BJ (cell line): ENCODE measurements at regions of chr11 and their contacts with region 1.

Region 1: GRCh38 chr11:2151500-2152257 is 9.3 kb downstream of the INS start:
- DNase-seq: no peak
- H3K4me3 ChIP-seq: no peak overlapping the region
- H3K27me3 ChIP-seq: peaks cover 11% of the 10 kb centered on the region
- CTCF ChIP-seq: peak; percentile 76

Region 2: GRCh38 chr11:1640076-1640946 is 511.4 kb before region 1 on chr11:
- CTCF ChIA-PET with region 1: interaction called, 11 read pairs
- POLR2A ChIA-PET with region 1: no interaction called
- DNase-seq: no peak
- H3K4me3 ChIP-seq: no peak overlapping the region
- H3K27me3 ChIP-seq: peaks cover 5% of the 10 kb centered on the region
- CTCF ChIP-seq: peak; percentile 86

Region 3: GRCh38 chr11:1832211-1832919 is 319.3 kb before region 1 on chr11:
- CTCF ChIA-PET with region 1: interaction called, 114 read pairs
- POLR2A ChIA-PET with region 1: no interaction called
- DNase-seq: no peak
- H3K4me3 ChIP-seq: no peak overlapping the region
- H3K27me3 ChIP-seq: peaks cover 2% of the 10 kb centered on the region; the same call in 1 of the 2 replicates
- CTCF ChIP-seq: peak; percentile 95

Region 4: GRCh38 chr11:1876361-1877063 is 275.2 kb before region 1 on chr11:
- CTCF ChIA-PET with region 1: interaction called, 114 read pairs
- POLR2A ChIA-PET with region 1: no interaction called
- DNase-seq: no peak
- H3K4me3 ChIP-seq: no peak overlapping the region
- H3K27me3 ChIP-seq: no peaks in the 10 kb centered on the region; the same call in 1 of the 2 replicates
- CTCF ChIP-seq: peak; percentile 70

Region 5: DNA sequence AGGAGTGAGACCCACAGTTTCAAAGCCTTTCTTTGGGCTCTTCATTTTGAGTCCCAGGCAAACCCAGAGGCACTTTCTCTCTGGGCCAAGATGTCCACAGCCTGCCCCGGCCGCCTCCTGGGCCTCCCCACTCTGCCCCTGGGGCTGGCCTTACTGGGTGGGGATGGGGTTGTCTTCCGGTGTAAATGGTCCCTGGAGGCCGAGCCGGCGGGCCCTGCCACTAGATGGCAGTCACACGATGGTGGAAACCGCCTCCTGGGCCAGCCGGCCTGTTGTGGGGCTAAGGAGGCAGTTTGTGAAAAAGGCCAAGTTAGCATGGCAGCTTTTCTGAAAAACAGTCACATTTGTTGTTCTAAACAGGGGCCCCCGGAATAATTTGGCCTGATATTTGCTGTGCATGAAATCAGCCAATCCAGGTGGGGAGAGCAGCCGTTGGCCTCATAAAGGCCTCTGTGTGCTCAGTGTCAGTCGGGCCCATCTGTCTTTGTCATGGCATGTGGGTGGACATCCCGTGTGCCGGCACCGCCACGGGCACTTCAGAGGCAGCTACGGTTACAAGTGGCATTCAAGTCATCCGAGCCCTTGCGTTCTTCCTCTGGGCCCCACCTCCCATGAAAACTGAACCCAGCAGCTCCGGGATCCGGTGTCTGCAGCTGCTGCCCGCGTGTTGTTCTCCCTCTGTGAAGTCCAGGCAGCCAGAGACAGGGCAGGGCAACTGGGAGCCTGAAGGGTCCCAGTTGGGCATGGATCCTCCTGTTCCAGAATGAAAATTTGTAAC is 198.0 kb before region 1 on chr11:
- CTCF ChIA-PET with region 1: interaction called, 85 read pairs
- POLR2A ChIA-PET with region 1: no interaction called
- DNase-seq: no peak
- H3K4me3 ChIP-seq: no peak overlapping the region
- H3K27me3 ChIP-seq: no peaks in the 10 kb centered on the region
- CTCF ChIP-seq: peak; percentile 17; the same call in 1 of the 2 replicates

Region 6: DNA sequence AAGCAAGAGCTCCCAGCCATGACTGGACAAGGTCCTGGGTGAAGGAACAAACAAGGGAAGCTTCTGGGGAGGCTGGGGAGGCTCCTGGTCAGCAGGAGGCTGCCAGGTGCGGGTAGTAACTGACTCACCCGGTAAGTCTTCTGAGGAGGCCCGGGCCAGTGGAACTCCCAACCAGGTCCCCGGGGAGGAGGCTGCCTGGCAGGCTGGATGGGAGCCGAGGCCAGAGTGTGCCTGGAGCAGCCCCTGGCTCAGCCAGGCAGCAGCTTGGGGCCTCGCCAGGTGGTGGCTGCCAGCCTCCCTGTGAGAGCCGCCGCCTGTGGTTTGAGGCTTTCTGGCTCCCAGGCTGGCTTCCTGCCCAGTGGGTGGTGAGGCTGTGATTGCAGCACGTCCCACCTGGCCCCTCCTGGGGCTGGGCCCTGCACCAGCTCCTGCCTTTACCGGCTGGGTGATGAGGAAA is 58.7 kb before region 1 on chr11:
- CTCF ChIA-PET with region 1: interaction called, 44 read pairs
- POLR2A ChIA-PET with region 1: no interaction called
- DNase-seq: no peak
- H3K4me3 ChIP-seq: no peak overlapping the region
- H3K27me3 ChIP-seq: no peaks in the 10 kb centered on the region
- CTCF ChIP-seq: no peak

Region 7: DNA sequence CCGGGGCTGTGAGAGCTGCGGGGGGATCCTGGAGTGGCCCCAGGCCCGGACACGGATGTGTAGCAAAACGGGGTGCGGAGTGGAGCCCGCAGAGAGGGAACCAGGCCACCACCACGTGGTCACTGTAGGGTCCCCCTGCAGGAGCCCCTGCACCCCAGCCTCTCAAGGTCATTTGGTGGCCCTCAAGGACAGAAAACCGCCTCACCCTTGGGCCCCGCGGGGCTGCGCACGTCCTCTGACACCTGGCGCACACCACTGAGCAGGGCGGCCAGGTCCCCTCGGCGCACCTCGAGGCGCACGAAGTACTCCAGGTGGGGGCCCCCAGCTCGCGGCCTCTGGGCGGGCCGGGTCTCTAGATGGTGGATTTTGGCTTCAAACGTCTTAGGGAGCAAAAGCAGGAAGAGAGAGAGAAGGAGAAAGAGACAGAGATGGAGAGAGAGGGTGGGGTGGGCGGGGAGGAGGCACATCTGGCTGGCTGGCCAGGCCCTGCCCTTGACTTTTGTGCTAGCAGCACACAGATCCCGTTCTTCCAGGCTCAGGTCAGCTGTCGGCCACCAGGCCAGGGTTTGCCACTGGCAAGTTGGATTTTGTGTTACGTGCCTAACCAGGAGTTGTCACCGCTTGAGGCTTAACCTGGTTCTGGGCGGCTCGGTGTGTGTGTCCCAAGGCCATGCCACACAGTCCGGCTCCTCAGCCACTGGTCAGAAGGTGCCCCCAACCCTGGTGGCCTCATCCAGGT is 16.8 kb after region 1 on chr11:
- CTCF ChIA-PET with region 1: interaction called, 42 read pairs
- POLR2A ChIA-PET with region 1: no interaction called
- DNase-seq: no peak
- H3K4me3 ChIP-seq: no peak overlapping the region
- H3K27me3 ChIP-seq: no peaks in the 10 kb centered on the region
- CTCF ChIP-seq: no peak